AG04449 (cell line): ENCODE measurements at regions of chr1 and their contacts with region 1.

Region 1: GRCh38 chr1:93734999-93735398 is 53.4 kb upstream of the BCAR3 start:
- DNase-seq: no peak
- H3K4me3 ChIP-seq: no peak overlapping the region
- CTCF ChIP-seq: peak; percentile 30

Region 2: GRCh38 chr1:93468662-93469061 is 266.3 kb before region 1 on chr1:
- CTCF ChIA-PET with region 1: no interaction called
- POLR2A ChIA-PET with region 1: no interaction called
- DNase-seq: no peak
- H3K4me3 ChIP-seq: no peak overlapping the region
- CTCF ChIP-seq: no peak

Region 3: GRCh38 chr1:93629099-93630059 is 105.6 kb before region 1 on chr1:
- CTCF ChIA-PET with region 1: interaction called, 17 read pairs
- POLR2A ChIA-PET with region 1: interaction called, 3 read pairs
- DNase-seq: no peak
- H3K4me3 ChIP-seq: no peak overlapping the region
- CTCF ChIP-seq: peak; percentile 70

Region 4: GRCh38 chr1:93701619-93702018 is 33.4 kb before region 1 on chr1:
- CTCF ChIA-PET with region 1: interaction called, 20 read pairs
- POLR2A ChIA-PET with region 1: interaction called, 4 read pairs
- DNase-seq: peak; percentile 97
- H3K4me3 ChIP-seq: no peak overlapping the region
- CTCF ChIP-seq: no peak

Region 5: GRCh38 chr1:93715529-93716126 is 19.4 kb before region 1 on chr1:
- CTCF ChIA-PET with region 1: interaction called, 28 read pairs
- POLR2A ChIA-PET with region 1: interaction called, 4 read pairs
- DNase-seq: peak; percentile 5
- H3K4me3 ChIP-seq: no peak overlapping the region
- CTCF ChIP-seq: no peak

Region 6: GRCh38 chr1:93749894-93750301 is 14.9 kb after region 1 on chr1:
- CTCF ChIA-PET with region 1: interaction called, 23 read pairs
- POLR2A ChIA-PET with region 1: no interaction called
- DNase-seq: no peak
- H3K4me3 ChIP-seq: no peak overlapping the region
- CTCF ChIP-seq: peak; percentile 4

Region 7: GRCh38 chr1:93917302-93917701 is 182.3 kb after region 1 on chr1:
- CTCF ChIA-PET with region 1: no interaction called
- POLR2A ChIA-PET with region 1: no interaction called
- DNase-seq: no peak
- H3K4me3 ChIP-seq: no peak overlapping the region
- CTCF ChIP-seq: no peak